WTC11 (cell line): ENCODE measurements at regions of chr20 and their contacts with region 1.

Region 1: GRCh38 chr20:407133-407952 is 756 bp upstream of the RBCK1 start:
- DNase-seq: peak; percentile 89
- ATAC-seq: peak; percentile 93
- H3K4me3 Mint-ChIP-seq: peak overlapping the region; percentile 86
- H3K27ac Mint-ChIP-seq: peak overlapping the region; percentile 97
- H3K4me1 Mint-ChIP-seq: peaks cover 21% of the 10 kb centered on the region
- H3K27me3 Mint-ChIP-seq: peaks cover 8% of the 10 kb centered on the region; the same call in 1 of the 2 replicates
- CTCF ChIP-seq: no peak

Region 2: DNA sequence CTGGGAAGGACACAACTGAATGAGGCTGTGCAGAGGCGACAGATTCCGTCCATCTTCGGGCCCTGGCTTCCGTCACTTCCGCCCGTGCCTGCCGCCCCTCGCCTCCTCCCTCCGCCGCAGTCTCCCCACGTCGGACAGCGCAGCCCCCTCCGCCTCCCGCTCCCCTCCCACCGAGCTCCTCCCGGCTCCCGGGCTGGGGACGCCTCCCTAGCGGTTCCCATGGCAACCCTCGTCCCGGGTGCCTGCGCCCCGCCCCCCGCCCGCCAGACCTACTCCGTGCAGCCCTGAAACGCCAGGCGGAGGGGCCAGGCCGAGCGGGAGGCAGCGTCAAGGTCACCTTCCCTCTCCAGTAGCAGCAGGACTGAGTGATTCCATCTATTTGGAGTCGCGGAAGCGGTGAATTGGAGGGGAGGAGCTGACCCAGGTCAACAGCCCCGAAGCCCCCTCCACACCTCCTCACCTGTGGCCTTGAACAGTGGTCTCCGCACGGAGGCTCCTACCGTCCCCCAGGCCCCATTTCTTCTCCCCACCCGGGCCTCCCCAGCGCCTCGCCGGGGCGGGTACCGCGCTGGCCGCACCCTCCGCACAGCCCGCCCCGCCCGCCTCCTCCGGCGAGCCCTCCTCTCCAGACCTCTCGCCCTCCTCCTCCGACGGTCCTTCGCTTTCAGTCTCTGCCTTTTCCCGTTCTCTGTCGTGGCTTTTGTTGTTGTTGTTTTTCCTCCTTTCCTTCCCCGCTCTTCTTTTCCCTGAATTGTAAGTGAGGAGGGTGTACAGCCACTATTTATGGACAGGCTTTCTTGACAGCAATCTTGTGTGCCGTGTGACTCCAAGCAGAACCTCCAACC is 59.5 kb before region 1 on chr20:
- CTCF ChIA-PET with region 1: interaction called, 8 read pairs
- POLR2A ChIA-PET with region 1: interaction called, 11 read pairs
- DNase-seq: peak; percentile 97
- ATAC-seq: peak; percentile 80
- H3K4me3 Mint-ChIP-seq: peak overlapping the region; percentile 89
- H3K27ac Mint-ChIP-seq: peak overlapping the region; percentile 93
- H3K4me1 Mint-ChIP-seq: peaks cover 17% of the 10 kb centered on the region
- H3K27me3 Mint-ChIP-seq: peaks cover 15% of the 10 kb centered on the region
- CTCF ChIP-seq: no peak

Region 3: GRCh38 chr20:475463-476357 is 68.4 kb after region 1 on chr20:
- CTCF ChIA-PET with region 1: no interaction called
- POLR2A ChIA-PET with region 1: no interaction called
- DNase-seq: no peak
- ATAC-seq: no peak
- H3K4me3 Mint-ChIP-seq: no peak overlapping the region
- H3K27ac Mint-ChIP-seq: no peak overlapping the region
- H3K4me1 Mint-ChIP-seq: no peaks in the 10 kb centered on the region
- H3K27me3 Mint-ChIP-seq: peaks cover 22% of the 10 kb centered on the region
- CTCF ChIP-seq: no peak